ENCODE measurements at regions of chr7 and their contacts with region 1.

Region 1: GRCh38 chr7:150448789-150449147 is 1.7 kb upstream of the GIMAP8 start:
- DNase-seq: peak; percentile 78 to 95
- ATAC-seq: peak; percentile 69 to 76 (median 72)
- H3K4me3 ChIP-seq: no peak overlapping the region
- H3K4me3 Mint-ChIP-seq: peak overlapping the region; percentile 96
- H3K27ac ChIP-seq: peak overlapping the region; percentile 89
- H3K27ac Mint-ChIP-seq: peak overlapping the region; percentile 92 to 97
- H3K4me1 ChIP-seq: peaks cover 68% of the 10 kb centered on the region
- H3K4me1 Mint-ChIP-seq: peaks cover 53 to 65% of the 10 kb centered on the region in 2 donors
- H3K27me3 ChIP-seq: no peaks in the 10 kb centered on the region
- H3K27me3 Mint-ChIP-seq: no peaks in the 10 kb centered on the region
- CTCF ChIP-seq: peak; percentile 93

Region 2: GRCh38 chr7:150514748-150515222 is 66.0 kb after region 1 on chr7 and contains the start of gene GIMAP7:
- intact Hi-C with region 1: loop called (anchors 2 kb)
- DNase-seq: peak; percentile 46 to 83
- ATAC-seq: peak; percentile 74 to 84 (median 81)
- H3K4me3 ChIP-seq: peak within 1 kb of the TSS; percentile 83
- H3K4me3 Mint-ChIP-seq: peak within 1 kb of the TSS; percentile 100
- H3K27ac ChIP-seq: peak within 1 kb of the TSS; percentile 73
- H3K27ac Mint-ChIP-seq: peak within 1 kb of the TSS; percentile 96 to 100
- H3K4me1 ChIP-seq: peaks cover 34% of the 10 kb centered on the region
- H3K4me1 Mint-ChIP-seq: peaks cover 58 to 65% of the 10 kb centered on the region in 2 donors
- H3K27me3 ChIP-seq: no peaks in the 10 kb centered on the region
- H3K27me3 Mint-ChIP-seq: no peaks in the 10 kb centered on the region
- CTCF ChIP-seq: no peak
- total RNA-seq, gene GIMAP7: 66.3 to 100 (median 67.6) TPM

Region 3: GRCh38 chr7:150737265-150738055 is 288.7 kb after region 1 on chr7 and contains the start of gene GIMAP5:
- intact Hi-C with region 1: loop called (anchors 5 kb)
- DNase-seq: peak; percentile 51 to 71
- ATAC-seq: peak; percentile 85 to 88 (median 85)
- H3K4me3 ChIP-seq: peak within 1 kb of the TSS; percentile 84
- H3K4me3 Mint-ChIP-seq: peak within 1 kb of the TSS; percentile 91
- H3K27ac ChIP-seq: peak within 1 kb of the TSS; percentile 64
- H3K27ac Mint-ChIP-seq: peak within 1 kb of the TSS; percentile 86 to 91
- H3K4me1 ChIP-seq: peaks cover 35% of the 10 kb centered on the region
- H3K4me1 Mint-ChIP-seq: peaks cover 66 to 73% of the 10 kb centered on the region in 2 donors
- H3K27me3 ChIP-seq: no peaks in the 10 kb centered on the region
- H3K27me3 Mint-ChIP-seq: no peaks in the 10 kb centered on the region
- CTCF ChIP-seq: no peak
- total RNA-seq, gene GIMAP5: 29.2 to 64.1 (median 35.3) TPM

Measured in natural killer cell (primary cell).